HCT116 (cell line): ENCODE measurements at regions of chr5 and their contacts with region 1.

Region 1: GRCh38 chr5:150789943-150790611 is 11.5 kb downstream of the SMIM3 start:
- DNase-seq: peak; percentile 85
- ATAC-seq: peak; percentile 96
- H3K4me3 ChIP-seq: peak overlapping the region; percentile 3 to 45
- H3K27ac ChIP-seq: peak overlapping the region; percentile 79
- H3K4me1 ChIP-seq: peaks cover 59 to 60% of the 10 kb centered on the region in 2 experiments
- H3K27me3 ChIP-seq: no peaks in the 10 kb centered on the region
- CTCF ChIP-seq: no peak
- POLR2A ChIP-seq: no peak
- RAD21 ChIP-seq: peak; percentile 30; the same call in 1 of the 2 replicates

Region 2: GRCh38 chr5:150801117-150801927 is 11.2 kb after region 1 on chr5:
- CTCF ChIA-PET with region 1: interaction called, 12 read pairs
- POLR2A ChIA-PET with region 1: no interaction called
- RAD21 ChIA-PET with region 1: no interaction called
- intact Hi-C with region 1: no loop called
- DNase-seq: peak; percentile 51
- ATAC-seq: peak; percentile 84
- H3K4me3 ChIP-seq: peak overlapping the region; percentile 19 to 52
- H3K27ac ChIP-seq: peak overlapping the region; percentile 59
- H3K4me1 ChIP-seq: peaks cover 0 to 14% of the 10 kb centered on the region in 2 experiments; a peak in 2 of 4 replicates
- H3K27me3 ChIP-seq: no peaks in the 10 kb centered on the region
- CTCF ChIP-seq: peak; percentile 33 to 73 (median 42); a peak in 5 of 6 replicates
- POLR2A ChIP-seq: no peak
- RAD21 ChIP-seq: peak; percentile 43

Region 3: GRCh38 chr5:150829744-150830143 is 39.7 kb after region 1 on chr5:
- CTCF ChIA-PET with region 1: no interaction called
- POLR2A ChIA-PET with region 1: no interaction called
- RAD21 ChIA-PET with region 1: no interaction called
- intact Hi-C with region 1: no loop called
- DNase-seq: no peak
- ATAC-seq: no peak
- H3K4me3 ChIP-seq: no peak overlapping the region
- H3K27ac ChIP-seq: no peak overlapping the region
- H3K4me1 ChIP-seq: no peaks in the 10 kb centered on the region
- H3K27me3 ChIP-seq: no peaks in the 10 kb centered on the region
- CTCF ChIP-seq: no peak
- POLR2A ChIP-seq: no peak
- RAD21 ChIP-seq: no peak